Activated CD8-positive, alpha-beta T cell treated with anti-CD3 and anti-CD28 coated beads for 36 hours (primary cell): ENCODE measurements at regions of chr11 and their contacts with region 1.

Region 1: GRCh38 chr11:58179648-58180047 is 9.2 kb upstream of the OR9Q2 start:
- DNase-seq: peak; percentile 1
- ATAC-seq: no peak
- H3K4me3 Mint-ChIP-seq: no peak overlapping the region
- H3K27ac Mint-ChIP-seq: no peak overlapping the region
- H3K4me1 Mint-ChIP-seq: no peaks in the 10 kb centered on the region
- H3K27me3 Mint-ChIP-seq: peaks cover 10% of the 10 kb centered on the region
- CTCF ChIP-seq: no peak

Region 2: DNA sequence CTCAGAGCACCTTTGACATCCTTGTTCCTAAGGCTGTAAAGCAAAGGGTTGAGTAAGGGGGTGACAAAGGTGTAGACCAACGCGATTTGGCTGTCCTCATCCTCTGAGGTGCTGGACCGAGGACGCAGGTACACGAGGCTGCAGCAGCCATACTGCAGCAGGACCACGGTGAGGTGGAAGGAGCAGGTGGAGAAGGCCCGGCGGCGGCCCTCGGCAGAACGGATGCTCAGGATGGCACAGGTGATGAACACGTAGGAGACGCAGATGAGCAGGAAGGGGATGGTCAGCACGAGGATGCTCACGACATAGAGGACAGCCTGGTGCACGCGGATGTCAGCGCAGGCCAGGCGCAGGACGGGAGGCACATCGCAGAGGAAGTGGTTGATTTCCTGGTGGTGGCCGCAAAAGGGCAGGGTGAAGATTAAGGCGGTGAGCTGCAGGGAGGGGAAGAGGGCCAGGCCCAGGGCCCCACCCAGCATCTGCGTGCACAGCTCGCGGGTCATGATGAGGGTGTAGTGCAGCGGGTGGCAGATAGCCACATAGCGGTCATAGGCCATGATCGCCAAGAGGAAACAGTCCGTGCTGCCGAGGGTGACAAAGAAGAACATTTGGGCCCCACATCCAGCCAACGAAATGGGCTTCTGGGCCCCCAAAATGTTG is 48.4 kb after region 1 on chr11:
- CTCF ChIA-PET with region 1: no interaction called
- POLR2A ChIA-PET with region 1: no interaction called
- intact Hi-C with region 1: loop called (anchors 10 kb)
- DNase-seq: no peak
- ATAC-seq: no peak
- H3K4me3 Mint-ChIP-seq: no peak overlapping the region
- H3K27ac Mint-ChIP-seq: no peak overlapping the region
- H3K4me1 Mint-ChIP-seq: no peaks in the 10 kb centered on the region
- H3K27me3 Mint-ChIP-seq: peaks cover 3% of the 10 kb centered on the region
- CTCF ChIP-seq: no peak